ENCODE measurements at regions of chrX and their contacts with region 1.

Region 1: DNA sequence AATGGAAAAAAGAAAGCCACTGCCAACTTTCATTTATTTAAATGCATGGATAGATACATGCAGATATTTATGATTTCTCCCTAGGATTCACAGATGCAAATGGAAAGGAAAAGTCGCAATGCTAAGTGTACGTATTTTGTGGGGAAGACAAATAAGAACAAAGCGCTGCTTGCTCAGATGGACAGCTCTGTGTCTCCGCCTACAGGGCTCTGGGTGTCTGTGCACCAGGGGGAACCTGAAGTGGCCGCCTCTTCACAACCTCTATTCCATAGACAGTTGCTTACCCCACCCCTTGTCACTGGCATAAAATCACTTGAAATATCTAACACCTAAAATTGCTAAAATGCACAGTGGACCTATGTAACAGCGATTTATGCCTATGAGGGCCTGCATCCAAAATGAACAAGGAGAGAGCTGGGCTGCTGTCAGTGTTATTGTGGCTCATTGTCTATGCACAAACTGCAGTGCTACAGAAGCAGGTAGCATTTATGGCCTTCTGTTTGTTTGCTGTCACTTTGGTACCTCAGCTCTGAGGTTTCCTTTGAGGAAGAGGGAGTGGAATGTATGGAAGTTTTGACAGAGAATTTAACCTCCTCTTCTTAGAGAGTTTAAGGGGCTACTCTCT is 58.6 kb upstream of the PAGE1 start:
- DNase-seq: peak; percentile 3 to 11
- ATAC-seq: peak in 1 of 8 donors; percentile 44
- H3K4me3 ChIP-seq: no peak overlapping the region
- H3K27ac ChIP-seq: no peak overlapping the region
- H3K4me1 ChIP-seq: no peaks in the 10 kb centered on the region
- H3K27me3 ChIP-seq: peaks cover 0 to 84% (median 0%) of the 10 kb centered on the region in 7 donors
- CTCF ChIP-seq: peak; percentile 21 to 72 (median 56)

Region 2: DNA sequence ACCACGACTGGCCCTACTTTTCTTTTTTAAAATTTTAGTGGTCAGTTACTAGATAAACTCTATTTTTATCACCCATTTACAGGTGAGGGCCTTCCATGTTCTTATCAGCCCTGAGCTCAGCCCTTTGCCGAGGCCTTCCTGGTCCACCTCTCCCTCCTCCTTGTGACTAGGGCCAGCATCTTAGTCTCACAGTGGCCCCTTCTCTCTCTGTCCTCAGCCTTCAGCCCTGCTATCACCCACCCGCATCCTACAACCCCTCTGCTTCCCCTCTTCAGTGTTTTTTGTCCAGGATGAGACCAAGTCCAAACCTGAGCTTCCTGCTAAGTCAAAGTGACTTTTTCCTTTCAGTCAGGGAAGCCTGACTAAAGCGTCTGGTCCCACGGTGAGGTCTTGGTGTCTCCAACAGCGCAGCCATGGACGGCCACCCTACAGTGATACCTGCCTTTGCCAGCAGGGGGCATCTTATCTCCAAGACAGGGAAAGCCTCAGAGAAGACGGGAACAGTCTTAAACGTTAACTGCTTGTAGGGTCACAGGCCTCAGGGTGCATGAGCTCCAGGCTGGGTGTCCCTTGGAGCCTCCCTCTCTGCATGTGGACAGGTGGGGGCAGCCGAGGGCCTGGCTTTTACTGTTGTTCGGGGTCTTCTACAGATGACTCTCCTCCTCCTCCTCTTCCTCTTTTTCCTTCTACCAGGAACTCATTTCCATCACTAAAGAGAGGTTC is 462.6 kb before region 1 on chrX:
- intact Hi-C with region 1: loop called in 2 of 10 experiments (anchors 2 to 10 kb)
- DNase-seq: peak; percentile 33 to 48
- ATAC-seq: peak; percentile 41 to 76 (median 65)
- H3K4me3 ChIP-seq: no peak overlapping the region
- H3K27ac ChIP-seq: no peak overlapping the region
- H3K4me1 ChIP-seq: peaks cover 0 to 5% (median 0%) of the 10 kb centered on the region in 9 donors
- H3K27me3 ChIP-seq: peaks cover 0 to 10% (median 0%) of the 10 kb centered on the region in 7 donors
- CTCF ChIP-seq: peak; percentile 22 to 69 (median 58)

Measured in heart right ventricle (tissue), 16 donors.